Cardiac septum (tissue), 1 donor: ENCODE measurements at regions of chr3 and their contacts with region 1.

Region 1: GRCh38 chr3:177197041-177197727 is at the start of gene TBL1XR1:
- DNase-seq: peak; percentile 96
- total RNA-seq, gene TBL1XR1: 164 TPM

Region 2: DNA sequence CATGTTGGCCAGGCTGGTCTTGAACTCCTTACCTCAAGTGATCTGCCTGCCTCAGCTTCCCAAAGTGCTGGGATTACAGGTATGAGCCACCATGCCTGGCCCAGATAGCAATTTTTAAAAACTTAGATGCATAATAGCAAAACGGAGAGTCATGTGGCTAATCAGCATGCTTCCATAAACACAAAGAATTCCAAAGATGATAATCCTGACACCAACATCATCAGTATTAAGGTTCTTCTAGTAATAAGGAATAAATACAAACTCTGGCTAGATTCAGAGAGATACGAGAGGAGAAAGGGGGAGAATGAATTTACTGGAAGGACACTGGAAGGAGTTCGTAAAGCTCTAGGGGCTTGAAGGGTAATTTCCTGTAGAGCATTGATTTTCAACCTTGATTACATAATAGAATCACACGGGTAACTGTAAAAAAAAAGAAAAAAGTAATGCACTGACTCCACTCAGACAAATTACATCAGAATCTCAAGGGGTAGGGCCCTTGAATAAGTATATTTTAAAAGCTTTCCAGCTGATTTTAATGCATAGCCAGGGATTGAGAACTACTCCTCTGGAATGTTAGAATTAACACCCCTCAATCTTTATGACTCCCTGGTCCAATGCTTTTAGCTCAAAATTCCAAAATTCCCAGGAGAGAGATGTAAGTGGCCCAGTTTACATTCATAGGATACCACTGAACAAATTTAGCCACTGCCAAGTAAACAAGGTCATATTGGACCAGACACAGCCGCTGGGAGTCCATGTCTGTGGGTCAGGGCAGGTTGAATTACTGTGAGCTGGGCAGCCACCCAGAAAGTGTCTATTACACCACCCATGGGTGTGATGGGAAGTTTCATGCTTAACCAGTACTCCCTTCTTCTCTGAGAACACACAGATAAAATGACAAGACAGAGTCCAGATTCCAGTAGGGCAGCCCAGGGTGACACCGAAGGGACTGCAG is 243.8 kb before region 1 on chr3:
- intact Hi-C with region 1: loop called (anchors 2 kb)
- DNase-seq: peak; percentile 84

Region 3: GRCh38 chr3:177294221-177294620 is 97.0 kb after region 1 on chr3:
- intact Hi-C with region 1: loop called (anchors 5 kb)
- DNase-seq: no peak

Region 4: DNA sequence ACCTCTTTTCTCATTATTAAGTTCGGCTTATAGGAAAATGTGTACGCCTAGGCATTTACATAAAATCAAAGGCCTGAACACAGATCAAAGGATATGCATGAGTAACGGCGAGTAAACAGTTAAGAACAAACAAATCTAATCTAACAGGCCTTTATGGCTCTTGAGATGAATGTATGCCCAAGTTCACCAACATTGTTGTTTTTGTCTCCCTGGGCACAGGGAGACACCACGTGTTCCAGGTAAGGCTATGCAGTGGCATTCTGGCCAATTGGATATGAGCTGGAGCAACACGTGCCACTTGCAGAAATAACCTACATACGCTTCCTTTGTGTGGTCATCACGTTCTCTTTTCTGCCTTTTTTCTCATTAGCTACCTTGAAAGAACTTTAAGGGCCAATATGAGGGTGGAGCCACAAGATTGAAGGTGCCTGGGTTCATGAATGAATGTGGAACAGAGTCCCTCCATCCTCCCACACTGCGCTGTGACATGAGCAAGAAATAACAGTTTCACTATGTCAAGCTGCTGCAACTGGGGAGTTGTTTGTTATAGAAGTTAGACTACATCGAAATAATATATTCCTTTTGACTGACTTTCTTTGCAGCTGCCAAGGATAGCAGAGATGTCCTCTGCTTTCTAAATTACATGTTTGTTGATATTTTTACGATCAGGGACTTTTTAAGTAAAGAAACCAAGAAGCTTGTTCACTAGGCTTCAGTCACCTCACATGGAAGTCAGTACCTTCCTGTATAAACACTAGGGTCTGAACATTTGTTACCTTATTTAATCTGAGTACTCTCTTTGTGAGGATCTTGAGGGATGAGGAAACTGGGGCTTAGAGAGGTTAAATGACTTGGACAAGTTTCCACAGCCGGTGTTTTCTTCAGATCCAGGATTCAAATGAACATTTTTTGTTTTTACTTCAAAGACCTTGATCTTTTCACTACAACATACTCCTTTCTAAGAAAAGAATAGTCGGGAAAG is 427.6 kb after region 1 on chr3:
- intact Hi-C with region 1: loop called (anchors 10 kb)
- DNase-seq: no peak

Region 5: DNA sequence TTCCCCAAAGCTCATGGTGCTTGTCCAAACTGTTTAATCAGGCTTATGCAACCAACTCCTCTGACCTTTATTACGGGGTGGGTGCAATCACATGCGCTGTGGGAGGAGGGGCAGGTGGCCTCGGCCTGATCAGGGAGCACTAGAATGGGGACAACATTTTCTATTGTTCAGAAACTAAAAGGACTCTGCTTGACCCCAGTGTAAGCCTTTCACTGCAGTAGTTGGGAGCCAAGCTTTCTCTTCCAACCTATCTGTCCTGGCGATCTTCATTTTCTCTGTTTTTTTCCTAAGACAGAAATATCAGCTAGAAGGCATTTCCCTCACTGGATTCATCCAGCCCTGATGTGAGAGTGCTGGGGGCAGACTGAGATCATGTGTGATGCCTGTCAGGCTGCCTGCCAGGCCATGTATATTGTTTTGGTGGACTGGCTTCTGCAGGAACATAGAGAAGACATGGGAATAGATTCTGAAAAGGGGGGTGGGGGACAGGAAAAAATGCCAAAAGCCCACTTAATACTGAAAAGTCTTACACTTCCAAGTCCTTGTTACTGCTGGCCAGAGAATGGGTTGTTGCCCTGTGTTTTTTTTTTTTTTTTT is 627.1 kb after region 1 on chr3:
- intact Hi-C with region 1: loop called (anchors 5 kb)
- DNase-seq: no peak

Region 6: DNA sequence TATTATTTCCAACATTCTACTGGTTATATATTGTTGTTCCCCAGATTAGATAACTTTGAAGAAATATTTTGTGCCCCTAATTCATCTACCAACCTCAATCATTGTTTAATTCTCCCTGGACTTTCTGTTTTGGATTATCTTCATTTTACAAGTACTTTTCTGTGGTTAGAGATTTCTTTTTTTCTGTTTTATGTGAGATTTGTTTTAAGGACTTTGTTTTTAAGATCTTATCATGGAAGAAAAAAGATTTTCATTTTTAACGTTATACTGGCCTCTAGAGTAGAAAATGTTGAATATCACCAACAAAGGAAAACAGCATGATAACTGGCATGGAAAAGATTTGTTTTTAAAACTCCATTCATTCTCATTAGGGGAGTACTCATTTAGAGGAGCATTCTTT is 1128.1 kb after region 1 on chr3:
- intact Hi-C with region 1: loop called (anchors 2 kb)
- DNase-seq: no peak